ENCODE measurements at regions of chr7 and their contacts with region 1.

Region 1: DNA sequence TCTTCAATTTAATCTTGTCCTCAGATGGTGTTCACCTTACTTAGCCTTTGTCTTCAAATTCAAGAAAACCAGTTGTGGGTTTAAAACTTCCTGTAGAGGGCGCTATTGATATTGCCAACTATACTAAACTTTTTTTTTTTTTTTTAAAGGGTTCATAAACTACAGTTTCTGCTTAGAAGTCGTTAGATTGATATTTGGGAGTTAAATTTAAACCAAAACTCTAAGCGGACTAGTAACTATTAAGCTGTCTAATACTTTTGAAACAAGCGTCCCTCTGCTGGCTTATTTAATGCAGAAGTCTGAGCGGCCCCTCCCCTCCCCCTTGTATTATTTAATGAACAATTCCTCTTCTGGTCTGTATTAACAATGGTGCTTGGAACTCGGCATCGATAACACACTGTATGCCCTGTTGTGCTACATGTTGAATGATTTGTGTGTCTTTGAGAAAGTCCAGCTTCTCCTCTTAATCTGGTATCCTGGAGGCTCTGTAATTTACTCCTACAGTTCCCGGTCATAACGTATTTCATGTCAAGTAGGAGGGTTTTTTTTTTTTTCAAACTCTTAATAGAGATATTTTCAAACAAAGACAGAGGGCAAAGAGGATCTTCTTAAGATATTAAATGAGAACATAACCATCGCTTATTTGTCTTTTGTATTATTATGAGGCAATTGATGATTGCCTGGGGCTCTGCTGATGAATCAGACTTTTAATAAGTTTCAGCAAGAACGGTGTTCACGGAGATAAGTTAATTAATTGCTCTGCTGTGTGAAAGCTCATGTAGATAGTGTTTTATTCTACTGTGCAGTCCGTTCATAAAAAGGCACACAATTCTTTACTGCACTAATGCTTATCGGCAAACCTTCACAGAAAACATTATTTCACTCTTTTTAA is 22.6 kb upstream of the CREB5 start:
- DNase-seq: no peak
- H3K4me3 ChIP-seq: peak overlapping the region; percentile 20 to 40
- H3K27ac ChIP-seq: no peak overlapping the region
- H3K4me1 ChIP-seq: peaks cover 0 to 10% (median 0%) of the 10 kb centered on the region in 4 donors
- H3K27me3 ChIP-seq: no peaks in the 10 kb centered on the region
- CTCF ChIP-seq: peak; percentile 68 to 80

Region 2: DNA sequence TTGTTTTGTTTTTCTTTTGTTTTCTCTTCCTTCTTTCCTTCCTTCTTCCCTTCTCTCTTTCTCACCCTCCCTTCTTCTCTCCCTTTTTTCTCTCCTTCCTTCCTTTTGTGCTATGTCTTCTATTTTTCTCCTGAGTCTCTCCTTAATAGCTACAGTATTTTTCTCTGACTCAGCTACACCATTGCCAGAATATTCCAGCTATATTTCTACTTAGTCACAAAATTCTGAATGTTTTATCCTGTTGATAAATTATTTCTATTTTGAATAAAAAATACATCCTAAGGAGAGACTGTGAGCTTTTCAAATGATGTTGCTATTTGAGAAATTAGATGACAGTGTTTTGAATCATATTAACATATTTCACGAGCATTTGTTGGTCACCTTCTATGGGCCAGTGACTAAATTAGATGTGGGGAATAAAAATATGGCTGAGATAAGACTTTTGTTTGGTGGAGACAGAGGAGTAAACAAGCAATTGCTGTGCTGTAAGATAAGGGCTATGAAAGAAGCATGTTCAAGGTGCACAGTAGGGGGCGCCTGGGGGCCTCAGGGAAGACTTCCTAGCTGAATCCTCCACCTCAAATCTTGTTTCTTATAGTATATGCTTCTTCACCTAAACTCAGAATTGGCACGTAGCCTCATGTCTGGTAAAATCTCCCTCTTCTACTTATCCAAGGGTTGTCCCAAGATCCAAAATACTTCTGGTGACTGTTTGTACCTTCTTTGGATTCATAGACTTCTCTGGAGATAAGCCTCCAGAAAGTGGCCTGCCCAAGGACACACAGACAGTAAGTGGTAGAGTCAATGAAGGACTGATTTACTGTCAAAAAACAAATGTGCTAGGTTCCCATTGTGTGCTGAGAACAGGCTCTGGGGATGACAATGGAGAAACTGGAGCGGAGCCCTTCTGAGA is 92.9 kb before region 1 on chr7:
- intact Hi-C with region 1: no loop called
- DNase-seq: no peak
- H3K4me3 ChIP-seq: no peak overlapping the region
- H3K27ac ChIP-seq: no peak overlapping the region
- H3K4me1 ChIP-seq: no peaks in the 10 kb centered on the region
- H3K27me3 ChIP-seq: no peaks in the 10 kb centered on the region
- CTCF ChIP-seq: peak in 1 of 2 experiments; percentile 10

Region 3: GRCh38 chr7:28536259-28536658 is 146.5 kb after region 1 on chr7:
- intact Hi-C with region 1: loop called (anchors 10 kb)
- DNase-seq: no peak
- H3K4me3 ChIP-seq: peak overlapping the region in 1 of 2 donors; percentile 14
- H3K27ac ChIP-seq: no peak overlapping the region
- H3K4me1 ChIP-seq: peaks cover 0 to 16% (median 4%) of the 10 kb centered on the region in 4 donors
- H3K27me3 ChIP-seq: no peaks in the 10 kb centered on the region
- CTCF ChIP-seq: peak; percentile 32 to 48